AG04449 (cell line): ENCODE measurements at regions of chr4 and their contacts with region 1.

Region 1: DNA sequence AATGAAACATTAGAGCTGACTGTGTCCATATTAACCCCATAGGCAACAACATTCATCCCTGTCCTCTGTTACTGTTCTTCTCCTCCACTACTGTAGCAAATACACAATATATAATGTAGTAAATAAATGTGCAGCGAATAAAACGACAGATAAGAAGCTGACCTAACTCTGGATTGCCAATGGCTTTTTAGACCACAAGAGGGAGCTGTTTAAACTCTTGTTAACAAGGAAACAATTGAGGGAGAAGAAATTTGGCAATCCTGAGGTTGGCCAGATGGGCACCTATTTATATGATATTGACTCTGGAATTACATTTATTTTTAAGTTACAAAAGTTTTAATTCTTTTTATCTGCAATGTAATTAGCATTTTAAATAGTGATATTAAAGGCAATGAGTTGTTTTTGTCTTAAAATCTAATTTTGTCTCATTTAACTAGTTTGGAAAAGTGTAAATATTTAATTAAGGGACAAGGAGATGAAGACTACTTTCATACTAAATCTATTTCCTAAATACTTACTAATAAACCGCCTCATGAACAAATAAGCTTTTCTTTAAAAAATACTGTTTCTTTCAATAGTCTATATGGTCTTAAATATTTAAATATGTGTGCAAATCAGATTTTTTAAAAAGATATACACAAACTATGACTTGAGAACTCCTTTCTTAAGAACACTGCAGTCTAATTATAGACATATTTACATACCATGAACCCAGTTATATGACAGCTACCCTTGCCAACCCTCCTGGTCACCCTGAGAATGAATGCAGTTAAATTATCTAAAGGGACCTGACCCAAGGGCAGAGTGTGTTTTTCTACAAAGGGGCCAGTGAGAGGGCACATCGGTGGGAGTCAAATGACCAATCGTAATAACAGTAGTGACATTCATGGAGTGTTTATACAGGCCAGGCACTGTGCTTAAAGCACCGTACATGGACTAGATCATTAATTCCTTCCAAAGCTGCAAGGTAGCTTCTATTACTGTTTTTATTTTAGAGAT is 52.9 kb upstream of the HPF1 start:
- DNase-seq: peak; percentile 52
- H3K4me3 ChIP-seq: no peak overlapping the region
- CTCF ChIP-seq: peak; percentile 57

Region 2: GRCh38 chr4:168550071-168550766 is 1260.4 kb before region 1 on chr4:
- CTCF ChIA-PET with region 1: no interaction called
- POLR2A ChIA-PET with region 1: no interaction called
- DNase-seq: no peak
- H3K4me3 ChIP-seq: no peak overlapping the region
- CTCF ChIP-seq: no peak

Region 3: GRCh38 chr4:169791527-169792156 is 19.0 kb before region 1 on chr4:
- CTCF ChIA-PET with region 1: interaction called, 53 read pairs
- POLR2A ChIA-PET with region 1: no interaction called
- DNase-seq: no peak
- H3K4me3 ChIP-seq: peak overlapping the region; percentile 51
- CTCF ChIP-seq: peak; percentile 43

Region 4: GRCh38 chr4:169861593-169861992 is 51.0 kb after region 1 on chr4:
- CTCF ChIA-PET with region 1: no interaction called
- POLR2A ChIA-PET with region 1: no interaction called
- DNase-seq: no peak
- H3K4me3 ChIP-seq: no peak overlapping the region
- CTCF ChIP-seq: no peak

Region 5: GRCh38 chr4:170008371-170008770 is 197.7 kb after region 1 on chr4:
- CTCF ChIA-PET with region 1: interaction called, 22 read pairs
- POLR2A ChIA-PET with region 1: no interaction called
- DNase-seq: no peak
- H3K4me3 ChIP-seq: no peak overlapping the region
- CTCF ChIP-seq: peak; percentile 5

Region 6: GRCh38 chr4:170027181-170027829 is 216.7 kb after region 1 on chr4:
- CTCF ChIA-PET with region 1: interaction called, 89 read pairs
- POLR2A ChIA-PET with region 1: interaction called, 7 read pairs
- DNase-seq: peak; percentile 88
- H3K4me3 ChIP-seq: peak overlapping the region; percentile 83
- CTCF ChIP-seq: no peak

Region 7: DNA sequence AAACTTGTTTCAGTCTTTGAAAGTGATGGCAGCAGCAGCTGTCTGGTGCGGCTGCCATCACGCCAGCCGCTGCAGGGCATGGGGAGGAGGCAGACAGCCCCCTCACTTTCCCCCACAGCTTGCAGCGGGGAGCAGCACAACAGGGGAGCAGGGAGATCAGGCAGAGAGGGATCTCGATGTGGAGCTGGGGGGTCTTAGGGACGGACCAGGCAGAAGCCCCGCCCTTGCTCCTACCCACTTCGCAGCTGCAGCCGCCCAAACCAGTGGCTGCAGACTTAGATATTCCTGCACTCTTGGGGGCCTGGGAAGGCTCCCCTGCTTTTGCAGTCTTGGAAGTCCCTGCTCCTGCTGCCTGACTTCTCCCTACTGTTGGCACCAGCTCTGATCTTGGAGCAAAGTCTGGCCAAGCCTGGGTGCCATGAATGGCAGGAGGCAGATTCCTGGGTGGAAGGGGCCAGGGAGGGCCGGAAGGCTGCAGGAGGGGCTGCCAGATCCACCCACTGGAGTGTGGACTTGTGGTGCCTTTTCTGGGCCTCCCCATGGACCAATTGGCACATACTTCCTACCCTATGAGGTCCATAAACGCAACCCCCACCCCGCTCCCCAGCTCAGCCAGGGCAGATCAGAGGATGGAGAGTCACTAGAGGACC is 229.5 kb after region 1 on chr4:
- CTCF ChIA-PET with region 1: interaction called, 30 read pairs
- POLR2A ChIA-PET with region 1: no interaction called
- DNase-seq: no peak
- H3K4me3 ChIP-seq: no peak overlapping the region
- CTCF ChIP-seq: no peak

Region 8: DNA sequence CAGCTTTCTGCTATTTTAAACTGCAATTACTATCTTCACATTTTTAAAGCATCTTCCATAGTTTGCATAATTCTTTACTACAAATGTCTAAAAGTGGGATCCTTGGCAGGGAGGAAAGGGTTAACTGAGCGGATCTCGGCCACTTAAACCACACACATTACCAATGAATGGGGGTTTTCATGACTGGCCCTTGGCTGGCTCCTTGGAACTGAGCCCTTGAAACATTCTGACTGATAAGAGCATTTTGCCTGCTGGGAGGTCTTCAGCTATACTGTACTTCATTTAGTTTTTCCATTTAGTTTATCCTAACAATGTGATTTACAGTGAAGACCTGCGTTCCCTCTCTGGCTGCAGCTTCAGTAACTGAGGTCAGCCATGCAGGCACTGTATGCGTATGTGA is 247.2 kb after region 1 on chr4:
- CTCF ChIA-PET with region 1: interaction called, 23 read pairs
- POLR2A ChIA-PET with region 1: no interaction called
- DNase-seq: no peak
- H3K4me3 ChIP-seq: no peak overlapping the region
- CTCF ChIP-seq: no peak